Activated CD8-positive, alpha-beta T cell treated with anti-CD3 and anti-CD28 coated beads for 36 hours (primary cell): ENCODE measurements at regions of chr10 and their contacts with region 1.

Region 1: DNA sequence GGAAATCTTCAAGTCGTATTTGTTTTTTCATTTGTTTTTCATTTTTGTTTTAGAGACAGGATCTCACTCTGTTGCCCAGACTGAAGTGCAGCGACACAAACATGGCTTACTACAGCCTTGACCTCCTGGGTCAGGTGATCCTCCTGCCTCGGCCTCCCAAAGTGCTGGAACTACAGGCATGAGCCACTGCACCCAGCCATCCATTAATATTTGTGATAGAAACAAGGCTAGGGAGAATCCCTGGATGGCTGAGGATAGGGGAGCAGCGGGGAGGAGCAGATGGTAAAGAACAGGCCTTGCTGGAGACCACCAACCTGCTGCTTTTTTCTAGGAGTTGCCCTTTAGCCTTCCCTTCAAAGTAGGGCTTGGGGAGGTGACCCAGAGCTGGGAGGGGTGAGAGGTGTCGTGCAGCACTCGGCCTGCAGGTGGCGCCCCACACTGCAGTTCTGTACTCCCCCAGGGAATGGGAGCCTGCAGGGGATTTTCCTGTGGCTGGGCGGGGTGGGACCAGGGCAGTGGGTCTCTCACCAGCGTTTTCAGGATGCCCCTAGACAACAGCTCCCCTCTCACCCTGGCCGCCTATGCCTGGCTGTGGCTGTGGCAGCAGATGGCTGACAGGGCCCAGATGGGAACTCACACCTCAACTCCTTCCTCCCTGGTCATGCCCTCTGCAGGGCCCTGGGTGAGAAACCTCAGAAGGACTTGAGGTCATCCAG is 12.6 kb upstream of the CDH23 start:
- DNase-seq: peak; percentile 84
- ATAC-seq: peak; percentile 97
- H3K4me3 Mint-ChIP-seq: no peak overlapping the region
- H3K27ac Mint-ChIP-seq: no peak overlapping the region
- H3K4me1 Mint-ChIP-seq: no peaks in the 10 kb centered on the region
- H3K27me3 Mint-ChIP-seq: peaks cover 2% of the 10 kb centered on the region
- CTCF ChIP-seq: peak; percentile 88

Region 2: DNA sequence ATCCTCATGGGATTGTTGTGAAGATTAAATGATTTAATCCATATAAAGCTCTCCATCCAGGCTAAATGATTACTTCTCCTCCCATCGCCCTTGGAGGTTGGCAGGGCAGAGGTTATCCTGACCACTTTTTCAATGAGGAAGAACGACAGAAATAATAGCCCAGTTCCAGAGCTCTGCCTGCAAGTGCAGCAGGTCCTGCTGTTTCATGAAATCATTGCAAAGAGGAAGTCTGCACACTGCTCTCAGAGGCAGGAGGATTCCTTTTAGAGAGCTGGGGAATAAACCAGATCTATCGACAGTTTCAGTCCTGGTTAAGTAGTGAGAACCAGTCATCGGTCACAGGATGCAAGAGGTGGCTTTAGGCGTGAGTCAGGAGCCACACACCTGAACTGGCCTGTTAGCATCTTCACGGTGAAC is 12.4 kb before region 1 on chr10:
- CTCF ChIA-PET with region 1: interaction called, 21 read pairs
- POLR2A ChIA-PET with region 1: interaction called, 3 read pairs
- intact Hi-C with region 1: no loop called
- DNase-seq: no peak
- ATAC-seq: no peak
- H3K4me3 Mint-ChIP-seq: no peak overlapping the region
- H3K27ac Mint-ChIP-seq: no peak overlapping the region
- H3K4me1 Mint-ChIP-seq: peaks cover 4% of the 10 kb centered on the region
- H3K27me3 Mint-ChIP-seq: peaks cover 4% of the 10 kb centered on the region
- CTCF ChIP-seq: no peak

Region 3: DNA sequence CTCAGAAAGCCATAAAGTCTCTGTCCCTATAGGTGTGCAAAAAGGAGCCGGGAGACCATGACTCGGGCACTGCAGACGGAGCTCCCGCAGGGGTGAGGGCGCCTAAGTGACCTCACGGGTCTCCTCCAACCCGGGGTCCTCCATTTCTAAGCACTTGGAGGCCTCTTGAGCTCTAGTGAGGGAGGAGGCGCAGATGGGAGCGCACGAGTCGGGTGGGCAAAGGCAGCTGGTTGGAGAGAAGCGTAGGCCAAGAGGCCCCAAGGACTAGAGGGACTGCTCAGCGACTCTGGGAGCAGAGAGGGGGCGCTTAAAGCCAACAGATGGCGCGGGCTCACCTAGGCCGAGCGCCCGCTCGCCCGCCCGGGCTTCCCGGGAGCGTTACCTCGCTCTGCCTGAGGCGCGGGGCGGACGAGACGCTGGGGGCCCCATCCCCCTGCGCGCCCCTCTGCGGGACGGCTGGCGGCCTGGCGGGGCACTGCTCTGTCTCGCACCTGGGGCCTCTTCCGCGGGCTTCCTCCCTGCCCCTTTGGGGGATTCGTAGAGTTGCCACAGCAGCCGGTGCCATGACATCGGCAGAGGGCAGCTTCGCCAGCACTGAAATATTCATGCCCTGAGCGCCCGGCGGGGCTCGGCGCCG is 12.1 kb after region 1 on chr10:
- CTCF ChIA-PET with region 1: interaction called, 60 read pairs
- POLR2A ChIA-PET with region 1: no interaction called
- intact Hi-C with region 1: no loop called
- DNase-seq: peak; percentile 59
- ATAC-seq: peak; percentile 80
- H3K4me3 Mint-ChIP-seq: peak overlapping the region; percentile 22
- H3K27ac Mint-ChIP-seq: no peak overlapping the region
- H3K4me1 Mint-ChIP-seq: no peaks in the 10 kb centered on the region
- H3K27me3 Mint-ChIP-seq: peaks cover 51% of the 10 kb centered on the region
- CTCF ChIP-seq: peak; percentile 4